B cell (primary cell): ENCODE measurements at regions of chr18 and their contacts with region 1.

Region 1: DNA sequence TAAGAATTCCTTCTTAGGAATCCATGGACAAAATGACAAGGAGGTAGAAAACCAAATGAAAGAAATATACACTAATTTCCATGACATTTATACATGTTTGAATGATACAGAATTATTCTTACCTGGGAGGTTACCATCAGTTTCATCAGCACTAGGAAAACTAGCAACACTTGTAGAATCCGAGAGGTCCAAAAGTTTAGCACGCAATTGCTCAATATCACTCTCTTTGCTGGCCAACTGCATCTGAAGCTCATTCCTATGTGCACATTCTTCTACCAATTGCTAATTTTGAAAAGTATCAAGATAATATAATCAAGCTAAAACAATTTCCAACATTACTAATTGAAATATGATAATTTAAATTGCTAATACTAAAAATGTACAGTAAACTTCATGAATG is 144.8 kb downstream of the ROCK1 start:
- DNase-seq: no peak
- ATAC-seq: no peak
- H3K4me3 ChIP-seq: no peak overlapping the region
- H3K4me3 Mint-ChIP-seq: no peak overlapping the region
- H3K27ac ChIP-seq: no peak overlapping the region
- H3K27ac Mint-ChIP-seq: no peak overlapping the region
- H3K4me1 ChIP-seq: no peaks in the 10 kb centered on the region
- H3K4me1 Mint-ChIP-seq: no peaks in the 10 kb centered on the region
- H3K27me3 ChIP-seq: no peaks in the 10 kb centered on the region
- H3K27me3 Mint-ChIP-seq: no peaks in the 10 kb centered on the region
- CTCF ChIP-seq: no peak

Region 2: DNA sequence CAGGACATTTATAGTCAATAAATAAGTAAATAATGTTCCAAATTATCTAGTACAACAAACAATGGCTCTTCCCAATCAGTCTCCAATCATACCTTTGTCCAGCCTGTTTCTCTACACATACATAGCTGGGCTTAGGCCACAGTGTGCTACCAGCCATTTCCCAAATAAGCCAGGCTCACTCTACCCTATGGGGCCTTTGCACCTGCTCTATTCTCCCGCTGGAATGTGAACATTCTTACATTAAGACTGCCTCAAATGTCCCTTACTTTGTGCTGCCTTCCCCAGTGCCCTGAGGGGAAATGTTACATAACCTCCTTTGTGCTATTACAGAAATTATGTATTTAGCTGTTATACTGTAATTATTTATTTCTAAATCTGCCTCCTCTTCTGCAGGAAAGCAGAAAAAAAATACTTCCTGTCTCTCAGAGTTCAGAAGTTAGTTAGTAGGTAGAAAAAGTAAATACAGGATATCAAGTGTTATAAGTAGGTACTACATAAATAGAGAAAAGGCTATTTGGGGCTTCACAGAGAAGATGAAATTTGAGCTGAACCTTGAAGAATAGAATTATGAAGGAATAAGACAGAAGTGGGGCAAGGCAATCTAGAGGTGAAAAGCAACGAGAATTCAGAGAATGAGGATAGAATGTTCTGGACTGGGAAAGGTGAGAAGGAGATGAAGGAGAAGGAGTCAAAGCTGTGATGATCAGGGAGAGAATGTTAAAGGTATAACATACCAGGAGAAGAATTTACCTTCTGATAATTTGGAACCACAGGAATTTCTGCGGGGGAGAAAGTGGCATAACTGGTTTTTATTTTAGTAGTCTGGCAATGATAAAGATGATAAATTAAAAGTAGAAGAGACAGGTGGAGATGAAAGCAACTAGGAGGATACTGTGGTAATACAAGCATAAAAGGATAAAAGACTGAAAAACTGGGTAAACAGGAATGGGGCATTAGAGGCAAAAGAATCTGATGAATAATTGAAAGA is 107.8 kb after region 1 on chr18:
- CTCF ChIA-PET with region 1: no interaction called
- POLR2A ChIA-PET with region 1: interaction called, 11 read pairs
- intact Hi-C with region 1: no loop called
- DNase-seq: no peak
- ATAC-seq: no peak
- H3K4me3 ChIP-seq: peak overlapping the region in 1 of 5 experiments; percentile 27
- H3K4me3 Mint-ChIP-seq: peak overlapping the region; percentile 55
- H3K27ac ChIP-seq: peak overlapping the region in 1 of 2 donors; percentile 43
- H3K27ac Mint-ChIP-seq: peak overlapping the region; percentile 56
- H3K4me1 ChIP-seq: peaks cover 54 to 65% of the 10 kb centered on the region in 2 donors
- H3K4me1 Mint-ChIP-seq: peaks cover 78% of the 10 kb centered on the region
- H3K27me3 ChIP-seq: no peaks in the 10 kb centered on the region
- H3K27me3 Mint-ChIP-seq: no peaks in the 10 kb centered on the region
- CTCF ChIP-seq: no peak